GM10248 (cell line): ENCODE measurements at regions of chr5 and their contacts with region 1.

Region 1: DNA sequence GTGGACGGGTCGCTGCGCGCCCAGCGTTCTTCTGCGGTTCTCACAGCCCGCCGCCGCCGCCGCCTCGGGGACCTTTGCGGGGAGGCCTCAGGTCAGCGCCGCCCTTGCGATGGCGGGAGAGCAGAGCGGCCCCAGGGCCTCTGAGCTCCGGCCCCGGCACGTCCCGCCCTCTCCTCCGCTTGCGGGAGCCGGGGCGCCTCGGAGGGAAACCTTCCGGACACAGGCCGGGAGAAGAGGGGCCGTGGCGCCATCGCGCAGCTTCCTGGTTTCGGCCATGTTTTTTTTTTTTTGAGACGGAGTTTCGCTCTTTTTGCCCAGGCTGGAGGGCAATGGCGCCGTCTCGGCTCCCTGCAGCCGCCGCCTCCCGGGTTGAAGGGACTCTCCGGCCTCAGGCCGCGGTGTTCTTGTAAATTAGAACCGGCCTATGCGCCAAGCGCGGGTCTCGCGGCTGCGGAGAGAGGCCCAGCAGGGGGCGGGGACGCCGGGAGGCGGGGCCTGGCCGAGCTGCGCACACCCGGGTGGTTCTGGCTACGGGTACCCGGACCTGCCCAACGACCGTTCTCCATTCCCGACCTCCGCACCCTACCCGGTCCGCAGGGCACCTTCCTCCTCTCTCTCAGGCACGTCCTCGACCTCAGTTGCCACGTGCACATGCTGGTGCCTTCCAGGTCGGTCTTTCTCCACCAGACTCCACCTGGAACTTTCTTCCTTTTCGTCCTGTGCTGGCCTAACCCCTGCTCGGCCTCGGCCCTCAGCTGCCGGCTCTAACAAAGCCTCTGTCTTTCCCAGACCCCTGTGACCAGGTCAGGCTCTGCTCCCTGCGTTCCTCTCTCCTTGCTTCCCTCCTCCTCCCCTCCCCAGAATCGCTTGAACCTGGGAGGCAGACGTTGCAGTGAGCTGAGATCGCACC is 28.8 kb upstream of the MGAT1 start:
- DNase-seq: peak; percentile 89
- CTCF ChIP-seq: peak; percentile 9

Region 2: GRCh38 chr5:180816608-180817534 is 14.5 kb before region 1 on chr5:
- CTCF ChIA-PET with region 1: interaction called, 21 read pairs
- POLR2A ChIA-PET with region 1: interaction called, 6 read pairs
- DNase-seq: no peak
- CTCF ChIP-seq: no peak

Region 3: GRCh38 chr5:180860887-180861822 is 29.8 kb after region 1 on chr5 and contains the start of gene ZFP62:
- CTCF ChIA-PET with region 1: interaction called, 11 read pairs
- POLR2A ChIA-PET with region 1: interaction called, 7 read pairs
- DNase-seq: peak; percentile 92
- CTCF ChIP-seq: no peak

Region 4: GRCh38 chr5:180982008-180982741 is 150.8 kb after region 1 on chr5:
- CTCF ChIA-PET with region 1: no interaction called
- POLR2A ChIA-PET with region 1: no interaction called
- DNase-seq: no peak
- CTCF ChIP-seq: no peak